ENCODE measurements at regions of chr15 and their contacts with region 1.

Region 1: DNA sequence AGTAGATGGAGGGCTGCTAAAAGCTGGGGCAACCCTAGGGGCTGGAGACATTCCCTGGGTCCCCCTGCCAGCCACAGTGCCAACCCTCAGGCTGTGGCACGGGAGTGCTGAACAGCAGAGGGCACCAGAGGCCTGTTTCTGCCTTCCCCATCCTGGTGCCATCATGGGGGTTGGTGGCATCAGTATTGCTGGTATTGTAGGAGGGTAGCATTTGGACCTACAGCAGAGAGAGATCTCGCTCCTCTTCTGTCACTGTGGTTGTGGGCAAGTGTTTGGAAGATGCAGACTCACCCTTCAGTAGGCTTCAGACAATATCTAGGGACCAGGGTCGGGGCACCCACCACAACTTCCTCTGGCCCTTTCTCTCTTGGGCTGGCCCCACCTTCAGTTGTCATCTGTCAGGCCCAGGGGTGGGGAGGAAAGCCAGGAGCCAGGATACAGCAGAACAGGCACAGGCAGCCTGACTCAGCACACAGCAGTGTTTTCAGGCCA is 123.5 kb downstream of the RPLP1 start:
- DNase-seq: peak; percentile 87
- H3K4me3 Mint-ChIP-seq: no peak overlapping the region
- H3K27ac Mint-ChIP-seq: peak overlapping the region; percentile 30
- H3K4me1 Mint-ChIP-seq: peaks cover 39% of the 10 kb centered on the region
- H3K27me3 Mint-ChIP-seq: peaks cover 9% of the 10 kb centered on the region

Region 2: DNA sequence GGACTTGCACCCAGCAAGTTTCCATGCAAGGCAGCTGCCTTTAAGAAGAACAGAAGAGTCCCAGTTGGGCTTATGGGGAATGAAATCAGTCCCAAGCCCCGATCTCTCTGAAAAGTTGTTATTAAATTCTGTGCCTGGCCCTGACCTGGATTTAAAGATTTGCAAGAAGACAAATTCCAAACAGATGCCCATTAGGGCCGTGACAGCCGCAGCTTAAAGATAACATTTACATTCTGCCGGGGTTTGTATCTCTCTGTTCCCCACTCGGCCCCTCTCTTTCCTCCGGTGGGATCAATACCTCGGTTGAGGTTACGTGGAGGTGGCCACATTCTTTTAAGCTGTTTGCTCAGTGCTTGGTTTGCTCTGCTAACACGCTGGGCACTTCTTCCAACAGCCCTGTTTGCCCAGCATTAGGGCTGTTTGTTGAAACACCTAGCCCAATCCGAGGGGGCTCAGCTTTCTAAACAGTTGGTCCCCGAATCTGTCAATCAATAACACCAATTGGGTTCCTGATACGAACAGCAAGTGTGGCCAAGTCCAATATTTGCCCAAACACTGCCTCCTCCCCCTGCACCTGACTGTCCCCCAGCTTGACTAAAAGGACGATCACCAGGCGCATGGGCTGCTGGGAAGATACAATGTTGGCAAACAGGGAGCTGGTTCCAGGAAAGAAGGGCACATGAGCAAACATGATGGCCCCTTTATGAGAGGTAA is 14.9 kb before region 1 on chr15:
- intact Hi-C with region 1: no loop called
- DNase-seq: no peak
- H3K4me3 Mint-ChIP-seq: no peak overlapping the region
- H3K27ac Mint-ChIP-seq: no peak overlapping the region
- H3K4me1 Mint-ChIP-seq: no peaks in the 10 kb centered on the region
- H3K27me3 Mint-ChIP-seq: peaks cover 11% of the 10 kb centered on the region

Region 3: GRCh38 chr15:69679623-69680228 is 103.6 kb after region 1 on chr15:
- intact Hi-C with region 1: loop called (anchors 10 kb)
- DNase-seq: peak; percentile 73
- H3K4me3 Mint-ChIP-seq: peak overlapping the region; percentile 4
- H3K27ac Mint-ChIP-seq: peak overlapping the region; percentile 70
- H3K4me1 Mint-ChIP-seq: peaks cover 22% of the 10 kb centered on the region
- H3K27me3 Mint-ChIP-seq: peaks cover 13% of the 10 kb centered on the region

Region 4: DNA sequence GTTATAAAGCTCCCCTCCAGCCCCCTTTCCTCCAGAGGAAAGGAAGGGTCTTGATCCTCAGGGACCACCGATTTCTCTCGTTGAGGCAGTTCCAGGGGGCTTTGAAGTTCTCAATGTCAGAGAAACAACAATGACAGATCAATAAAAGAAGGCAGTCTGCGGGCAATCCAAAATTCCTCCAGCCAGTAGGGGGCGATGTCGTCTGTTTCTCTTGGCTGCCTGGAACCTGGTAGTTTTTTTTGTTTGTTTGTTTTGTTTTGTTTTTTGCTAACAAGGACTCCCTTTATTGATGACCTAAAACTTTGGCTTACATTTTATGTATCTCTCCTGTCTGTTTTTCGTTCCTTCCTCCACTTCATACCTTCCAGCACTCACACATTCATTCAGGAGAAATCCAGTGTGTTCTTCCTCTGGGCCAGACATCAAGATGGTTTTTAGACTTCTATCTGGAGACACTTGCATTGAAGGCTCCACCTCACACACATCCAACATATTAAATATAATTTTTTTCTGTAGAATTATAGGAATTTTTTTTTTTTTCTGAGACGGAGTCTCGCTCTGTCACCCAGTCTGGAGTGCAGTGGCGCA is 153.2 kb after region 1 on chr15:
- intact Hi-C with region 1: loop called (anchors 5 kb)
- DNase-seq: peak; percentile 92
- H3K4me3 Mint-ChIP-seq: no peak overlapping the region
- H3K27ac Mint-ChIP-seq: peak overlapping the region; percentile 12
- H3K4me1 Mint-ChIP-seq: peaks cover 58% of the 10 kb centered on the region
- H3K27me3 Mint-ChIP-seq: peaks cover 14% of the 10 kb centered on the region